ENCODE measurements at regions of chr3 and their contacts with region 1.

Region 1: GRCh38 chr3:119240591-119241434 is at the start of gene B4GALT4:
- DNase-seq: no peak
- ATAC-seq: peak; percentile 94
- H3K4me3 ChIP-seq: peak within 1 kb of the TSS; percentile 98
- H3K27ac ChIP-seq: peak within 1 kb of the TSS; percentile 88
- H3K4me1 ChIP-seq: peaks cover 4% of the 10 kb centered on the region; the same call in 1 of the 2 replicates
- H3K27me3 ChIP-seq: no peaks in the 10 kb centered on the region
- CTCF ChIP-seq: no peak
- EP300 ChIP-seq: no peak
- POLR2A ChIP-seq: peak; percentile 98
- RAD21 ChIP-seq: no peak
- polyA plus RNA-seq, gene B4GALT4: 13.8 to 15.4 TPM

Region 2: GRCh38 chr3:118298133-118298532 is 942.7 kb before region 1 on chr3:
- CTCF ChIA-PET with region 1: no interaction called
- POLR2A ChIA-PET with region 1: no interaction called
- RAD21 ChIA-PET with region 1: no interaction called
- SMC1A ChIA-PET with region 1: no interaction called
- in situ Hi-C with region 1: no loop called
- intact Hi-C with region 1: no loop called
- DNase-seq: no peak
- ATAC-seq: peak; percentile 78
- H3K4me3 ChIP-seq: no peak overlapping the region
- H3K27ac ChIP-seq: no peak overlapping the region
- H3K4me1 ChIP-seq: no peaks in the 10 kb centered on the region
- H3K27me3 ChIP-seq: no peaks in the 10 kb centered on the region
- CTCF ChIP-seq: no peak
- EP300 ChIP-seq: no peak
- POLR2A ChIP-seq: no peak
- RAD21 ChIP-seq: no peak

Region 3: GRCh38 chr3:119098619-119099222 is 142.1 kb before region 1 on chr3:
- CTCF ChIA-PET with region 1: interaction called, 11 read pairs
- POLR2A ChIA-PET with region 1: no interaction called
- RAD21 ChIA-PET with region 1: interaction called, 3 read pairs
- SMC1A ChIA-PET with region 1: interaction called, 3 read pairs
- in situ Hi-C with region 1: no loop called
- intact Hi-C with region 1: no loop called
- DNase-seq: no peak
- ATAC-seq: peak; percentile 70
- H3K4me3 ChIP-seq: no peak overlapping the region
- H3K27ac ChIP-seq: no peak overlapping the region
- H3K4me1 ChIP-seq: no peaks in the 10 kb centered on the region
- H3K27me3 ChIP-seq: peaks cover 0 to 2% of the 10 kb centered on the region in 2 experiments; a peak in 1 of 4 replicates
- CTCF ChIP-seq: peak; percentile 49 to 69 (median 62); a peak in 5 of 6 replicates
- EP300 ChIP-seq: no peak
- POLR2A ChIP-seq: no peak
- RAD21 ChIP-seq: peak; percentile 86

Region 4: DNA sequence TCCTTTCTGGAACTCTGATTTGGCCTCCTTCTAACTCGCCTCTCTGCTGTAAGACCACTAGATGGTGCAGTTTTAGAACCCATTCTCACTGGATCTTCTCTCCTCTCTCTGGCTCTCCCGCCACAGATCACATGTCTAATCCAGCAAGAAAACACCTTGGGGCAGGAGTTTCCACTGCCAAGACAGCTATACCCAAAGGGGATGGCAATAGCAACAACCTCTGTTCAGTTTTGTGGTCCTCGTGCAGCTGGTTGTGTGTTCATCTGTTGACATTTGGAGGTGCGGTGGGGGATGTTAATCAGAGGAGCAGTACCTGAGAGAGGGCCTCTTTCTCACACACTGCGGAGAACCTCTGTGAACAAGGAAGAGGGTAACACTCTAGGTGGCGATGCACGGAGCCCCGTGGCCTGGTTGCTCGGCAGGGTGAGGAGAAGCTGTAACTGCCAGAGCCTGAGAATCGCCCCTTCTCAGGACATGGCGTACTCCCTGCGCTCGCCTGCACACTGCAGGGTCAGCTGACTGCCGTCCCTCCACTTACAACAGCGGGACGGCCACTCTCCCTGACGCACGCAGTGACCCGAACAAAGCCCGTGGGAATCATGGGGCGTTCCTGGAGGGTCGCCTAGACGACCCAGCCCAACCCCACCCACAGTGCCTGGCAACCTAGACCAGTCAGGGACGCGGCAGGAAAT is 95.2 kb before region 1 on chr3 and contains the start of gene TEX55:
- CTCF ChIA-PET with region 1: interaction called, 44 read pairs
- POLR2A ChIA-PET with region 1: interaction called, 5 read pairs
- RAD21 ChIA-PET with region 1: interaction called, 36 read pairs
- SMC1A ChIA-PET with region 1: interaction called, 13 read pairs
- in situ Hi-C with region 1: no loop called
- intact Hi-C with region 1: loop called (anchors 1 kb)
- DNase-seq: no peak
- ATAC-seq: peak; percentile 85
- H3K4me3 ChIP-seq: no peak within 1 kb of the TSS
- H3K27ac ChIP-seq: no peak within 1 kb of the TSS
- H3K4me1 ChIP-seq: no peaks in the 10 kb centered on the region
- H3K27me3 ChIP-seq: no peaks in the 10 kb centered on the region
- CTCF ChIP-seq: peak; percentile 48 to 57 (median 49); a peak in 5 of 6 replicates
- EP300 ChIP-seq: no peak
- POLR2A ChIP-seq: no peak
- RAD21 ChIP-seq: peak; percentile 47
- polyA plus RNA-seq, gene TEX55: not detected

Region 5: GRCh38 chr3:119223511-119223910 is 17.3 kb before region 1 on chr3:
- CTCF ChIA-PET with region 1: interaction called, 17 read pairs
- POLR2A ChIA-PET with region 1: interaction called, 3 read pairs
- RAD21 ChIA-PET with region 1: interaction called, 4 read pairs
- SMC1A ChIA-PET with region 1: interaction called, 11 read pairs
- in situ Hi-C with region 1: no loop called
- intact Hi-C with region 1: no loop called
- DNase-seq: no peak
- ATAC-seq: no peak
- H3K4me3 ChIP-seq: no peak overlapping the region
- H3K27ac ChIP-seq: no peak overlapping the region
- H3K4me1 ChIP-seq: no peaks in the 10 kb centered on the region
- H3K27me3 ChIP-seq: no peaks in the 10 kb centered on the region
- CTCF ChIP-seq: no peak
- EP300 ChIP-seq: no peak
- POLR2A ChIP-seq: no peak
- RAD21 ChIP-seq: no peak

Region 6: DNA sequence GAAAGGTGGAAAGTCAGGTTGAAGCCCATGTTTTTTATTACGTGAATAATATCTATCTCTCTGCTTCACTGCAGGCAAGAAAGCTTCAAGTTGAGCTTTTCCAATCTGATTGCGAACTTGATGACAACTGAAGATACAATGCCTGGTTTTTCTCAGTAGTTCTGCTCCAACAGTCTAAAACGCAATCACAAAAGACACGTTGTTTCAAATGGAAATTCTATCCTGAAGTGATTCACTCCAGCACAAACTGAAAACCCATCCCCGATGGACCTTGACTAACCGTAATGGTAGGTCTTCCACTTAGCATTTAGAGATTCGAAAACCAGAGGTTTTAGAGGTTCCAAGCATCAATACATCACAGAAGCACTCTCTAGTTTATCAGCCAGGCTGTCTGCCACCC is 10.7 kb before region 1 on chr3:
- CTCF ChIA-PET with region 1: interaction called, 17 read pairs
- POLR2A ChIA-PET with region 1: interaction called, 3 read pairs
- RAD21 ChIA-PET with region 1: interaction called, 6 read pairs
- SMC1A ChIA-PET with region 1: interaction called, 11 read pairs
- in situ Hi-C with region 1: no loop called
- intact Hi-C with region 1: no loop called
- DNase-seq: no peak
- ATAC-seq: no peak
- H3K4me3 ChIP-seq: no peak overlapping the region
- H3K27ac ChIP-seq: no peak overlapping the region
- H3K4me1 ChIP-seq: no peaks in the 10 kb centered on the region
- H3K27me3 ChIP-seq: no peaks in the 10 kb centered on the region
- CTCF ChIP-seq: no peak
- EP300 ChIP-seq: no peak
- POLR2A ChIP-seq: no peak
- RAD21 ChIP-seq: no peak

Region 7: GRCh38 chr3:119257682-119258410 is 17.0 kb after region 1 on chr3:
- CTCF ChIA-PET with region 1: interaction called, 34 read pairs
- POLR2A ChIA-PET with region 1: interaction called, 6 read pairs
- RAD21 ChIA-PET with region 1: interaction called, 24 read pairs
- SMC1A ChIA-PET with region 1: interaction called, 16 read pairs
- in situ Hi-C with region 1: no loop called
- intact Hi-C with region 1: no loop called
- DNase-seq: no peak
- ATAC-seq: peak; percentile 92
- H3K4me3 ChIP-seq: no peak overlapping the region
- H3K27ac ChIP-seq: no peak overlapping the region
- H3K4me1 ChIP-seq: peaks cover 10% of the 10 kb centered on the region; the same call in 1 of the 2 replicates
- H3K27me3 ChIP-seq: no peaks in the 10 kb centered on the region
- CTCF ChIP-seq: no peak
- EP300 ChIP-seq: no peak
- POLR2A ChIP-seq: no peak
- RAD21 ChIP-seq: no peak

Region 8: GRCh38 chr3:119293871-119294695 is 53.3 kb after region 1 on chr3 and contains the start of gene ARHGAP31:
- CTCF ChIA-PET with region 1: interaction called, 11 read pairs
- POLR2A ChIA-PET with region 1: interaction called, 5 read pairs
- RAD21 ChIA-PET with region 1: interaction called, 14 read pairs
- SMC1A ChIA-PET with region 1: interaction called, 7 read pairs
- in situ Hi-C with region 1: no loop called
- intact Hi-C with region 1: no loop called
- DNase-seq: peak; percentile 62
- ATAC-seq: peak; percentile 82
- H3K4me3 ChIP-seq: peak within 1 kb of the TSS; percentile 94
- H3K27ac ChIP-seq: peak within 1 kb of the TSS; percentile 96
- H3K4me1 ChIP-seq: peaks cover 27% of the 10 kb centered on the region
- H3K27me3 ChIP-seq: no peaks in the 10 kb centered on the region
- CTCF ChIP-seq: no peak
- EP300 ChIP-seq: peak in 1 of 2 experiments; percentile 14; a peak in 1 of 4 replicates
- POLR2A ChIP-seq: peak; percentile 81
- RAD21 ChIP-seq: no peak
- polyA plus RNA-seq, gene ARHGAP31: 0.97 to 1.6 TPM